ENCODE measurements at regions of chr4 and their contacts with region 1.

Region 1: GRCh38 chr4:76790377-76790776 is 107.6 kb downstream of the SOWAHB start:
- DNase-seq: no peak
- H3K4me3 ChIP-seq: no peak overlapping the region
- H3K27ac ChIP-seq: no peak overlapping the region
- H3K4me1 ChIP-seq: no peaks in the 10 kb centered on the region
- H3K27me3 ChIP-seq: no peaks in the 10 kb centered on the region
- CTCF ChIP-seq: no peak

Region 2: GRCh38 chr4:76579610-76580375 is 210.6 kb before region 1 on chr4:
- CTCF ChIA-PET with region 1: no interaction called
- POLR2A ChIA-PET with region 1: no interaction called
- intact Hi-C with region 1: no loop called
- DNase-seq: no peak
- H3K4me3 ChIP-seq: no peak overlapping the region
- H3K27ac ChIP-seq: no peak overlapping the region
- H3K4me1 ChIP-seq: no peaks in the 10 kb centered on the region
- H3K27me3 ChIP-seq: no peaks in the 10 kb centered on the region
- CTCF ChIP-seq: no peak

Region 3: DNA sequence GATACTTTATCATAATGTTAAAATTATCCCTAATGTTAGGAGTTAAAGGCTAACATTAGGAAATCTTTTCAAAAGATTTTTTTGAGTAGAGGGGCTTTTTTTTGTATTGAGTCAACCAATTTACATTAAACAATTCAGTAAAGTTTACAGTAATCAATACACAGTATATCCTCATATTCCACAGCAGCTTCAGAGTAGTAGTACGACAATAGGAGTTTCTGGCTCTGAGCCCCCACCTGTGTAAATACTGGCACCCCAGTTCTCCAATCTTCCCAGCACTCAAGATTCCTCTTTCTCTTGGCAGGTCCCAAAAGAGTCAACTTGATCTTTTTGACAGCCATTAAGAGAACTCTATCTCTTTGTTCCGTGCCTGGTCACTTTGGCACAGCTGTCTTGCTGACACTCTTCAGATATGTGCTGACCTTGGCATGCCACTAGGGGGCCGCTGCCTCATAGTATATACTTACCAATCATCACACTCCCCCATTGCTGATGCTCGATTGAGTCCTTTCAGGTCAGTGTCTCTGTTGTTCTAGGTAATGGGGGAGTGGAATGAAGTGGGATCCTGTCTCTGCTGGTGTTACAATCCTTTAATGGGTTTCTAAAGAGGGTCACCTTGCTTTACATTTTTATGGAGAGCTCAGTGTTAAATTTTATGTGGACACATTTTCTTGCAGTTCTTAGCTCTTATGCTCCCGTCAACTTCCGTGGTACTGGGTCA is 304.9 kb after region 1 on chr4:
- CTCF ChIA-PET with region 1: no interaction called
- POLR2A ChIA-PET with region 1: interaction called, 36 read pairs
- intact Hi-C with region 1: no loop called
- DNase-seq: peak in 1 of 2 experiments; percentile 30
- H3K4me3 ChIP-seq: no peak overlapping the region
- H3K27ac ChIP-seq: no peak overlapping the region
- H3K4me1 ChIP-seq: no peaks in the 10 kb centered on the region
- H3K27me3 ChIP-seq: no peaks in the 10 kb centered on the region
- CTCF ChIP-seq: peak; percentile 68

Region 4: GRCh38 chr4:77681792-77682191 is 891.4 kb after region 1 on chr4:
- CTCF ChIA-PET with region 1: no interaction called
- POLR2A ChIA-PET with region 1: no interaction called
- intact Hi-C with region 1: no loop called
- DNase-seq: no peak
- H3K4me3 ChIP-seq: no peak overlapping the region
- H3K27ac ChIP-seq: no peak overlapping the region
- H3K4me1 ChIP-seq: no peaks in the 10 kb centered on the region
- H3K27me3 ChIP-seq: no peaks in the 10 kb centered on the region
- CTCF ChIP-seq: no peak

Measured in PC-9 (cell line).